Activated B cell treated with CpG ODN at 0.5 μM for 24 hours (primary cell): ENCODE measurements at regions of chr17 and their contacts with region 1.

Region 1: DNA sequence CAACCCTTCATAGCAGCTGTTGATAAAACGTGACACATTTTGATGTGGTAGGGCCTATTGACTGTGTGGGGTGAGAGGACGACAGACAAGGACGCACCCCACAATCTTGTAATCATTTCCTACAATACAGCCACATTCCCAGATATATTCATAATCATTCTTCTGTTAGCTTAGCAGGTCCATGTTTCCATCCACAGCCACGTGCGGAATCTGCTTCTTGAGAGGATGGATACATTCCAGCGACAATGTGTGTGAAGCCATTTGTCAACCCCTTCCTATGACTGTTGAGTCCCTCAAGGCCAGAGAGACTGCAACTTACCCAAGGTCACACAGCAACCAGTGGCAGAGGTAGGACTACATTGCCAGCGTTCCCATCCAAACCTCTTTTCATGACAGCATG is 8.7 kb upstream of the COPS3 start:
- DNase-seq: no peak
- ATAC-seq: no peak
- H3K4me3 Mint-ChIP-seq: no peak overlapping the region
- H3K27ac Mint-ChIP-seq: no peak overlapping the region
- H3K4me1 Mint-ChIP-seq: no peaks in the 10 kb centered on the region
- H3K27me3 Mint-ChIP-seq: no peaks in the 10 kb centered on the region
- CTCF ChIP-seq: no peak

Region 2: DNA sequence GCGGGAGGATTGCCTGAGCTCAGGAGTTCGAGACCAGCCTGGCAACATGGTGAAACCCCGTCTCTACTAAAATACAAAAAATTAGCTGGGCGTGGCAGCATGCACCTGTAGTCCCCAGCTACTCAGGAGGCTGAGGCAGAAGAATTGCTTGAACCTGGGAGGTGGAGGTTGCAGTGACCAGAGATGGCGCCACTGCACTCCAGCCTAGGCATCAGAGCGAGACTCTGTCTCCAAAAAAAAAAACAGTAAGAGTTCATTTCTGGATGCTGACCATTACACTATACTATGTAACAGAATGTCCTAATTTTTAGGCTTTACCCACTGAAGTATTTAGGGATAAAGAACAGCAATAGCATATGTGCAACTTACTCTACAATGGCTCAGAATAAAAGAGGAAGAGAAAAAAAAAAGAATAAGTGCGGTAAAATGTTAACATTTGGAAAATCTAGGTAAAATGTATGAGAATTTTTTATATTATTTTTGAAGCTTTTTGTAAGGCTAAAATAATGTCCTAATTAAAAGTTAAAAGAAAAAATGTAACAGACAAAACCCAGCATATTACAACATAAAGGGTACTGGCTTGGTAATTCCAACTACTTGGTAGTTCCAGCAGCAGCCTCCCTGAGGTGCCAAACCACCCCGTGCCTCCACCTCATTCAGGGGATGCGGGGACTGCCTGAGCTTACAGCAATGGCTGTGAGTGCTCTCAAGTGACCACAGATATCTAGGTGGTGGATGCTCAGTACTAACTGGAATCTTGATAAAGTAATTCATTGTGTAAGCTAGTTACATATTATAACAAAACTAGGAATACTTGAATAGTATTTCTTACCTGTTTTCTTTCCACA is 19.6 kb before region 1 on chr17:
- CTCF ChIA-PET with region 1: no interaction called
- POLR2A ChIA-PET with region 1: interaction called, 21 read pairs
- intact Hi-C with region 1: no loop called
- DNase-seq: no peak
- ATAC-seq: no peak
- H3K4me3 Mint-ChIP-seq: no peak overlapping the region
- H3K27ac Mint-ChIP-seq: no peak overlapping the region
- H3K4me1 Mint-ChIP-seq: peaks cover 5% of the 10 kb centered on the region
- H3K27me3 Mint-ChIP-seq: no peaks in the 10 kb centered on the region
- CTCF ChIP-seq: no peak

Region 3: GRCh38 chr17:17445925-17446665 is 156.4 kb after region 1 on chr17:
- CTCF ChIA-PET with region 1: no interaction called
- POLR2A ChIA-PET with region 1: no interaction called
- intact Hi-C with region 1: no loop called
- DNase-seq: no peak
- ATAC-seq: no peak
- H3K4me3 Mint-ChIP-seq: no peak overlapping the region
- H3K27ac Mint-ChIP-seq: no peak overlapping the region
- H3K4me1 Mint-ChIP-seq: no peaks in the 10 kb centered on the region
- H3K27me3 Mint-ChIP-seq: peaks cover 7% of the 10 kb centered on the region
- CTCF ChIP-seq: no peak